Caco-2 (cell line): ENCODE measurements at regions of chr6 and their contacts with region 1.

Region 1: GRCh38 chr6:141988954-141989705 is 143.6 kb upstream of the GJE1 start:
- DNase-seq: peak in 1 of 2 experiments; percentile 65
- H3K4me3 ChIP-seq: no peak overlapping the region
- H3K4me3 Mint-ChIP-seq: no peak overlapping the region
- H3K27ac Mint-ChIP-seq: no peak overlapping the region
- H3K4me1 ChIP-seq: no peaks in the 10 kb centered on the region
- H3K4me1 Mint-ChIP-seq: no peaks in the 10 kb centered on the region
- H3K27me3 ChIP-seq: no peaks in the 10 kb centered on the region
- H3K27me3 Mint-ChIP-seq: peaks cover 4% of the 10 kb centered on the region
- CTCF ChIP-seq: peak; percentile 74 to 76

Region 2: GRCh38 chr6:142009647-142010046 is 20.5 kb after region 1 on chr6:
- CTCF ChIA-PET with region 1: interaction called, 4 read pairs
- POLR2A ChIA-PET with region 1: no interaction called
- intact Hi-C with region 1: loop called (anchors 1 kb)
- DNase-seq: peak in 1 of 2 experiments; percentile 23
- H3K4me3 ChIP-seq: no peak overlapping the region
- H3K4me3 Mint-ChIP-seq: no peak overlapping the region
- H3K27ac Mint-ChIP-seq: no peak overlapping the region
- H3K4me1 ChIP-seq: peaks cover 28% of the 10 kb centered on the region
- H3K4me1 Mint-ChIP-seq: peaks cover 33% of the 10 kb centered on the region
- H3K27me3 ChIP-seq: no peaks in the 10 kb centered on the region
- H3K27me3 Mint-ChIP-seq: no peaks in the 10 kb centered on the region
- CTCF ChIP-seq: no peak

Region 3: DNA sequence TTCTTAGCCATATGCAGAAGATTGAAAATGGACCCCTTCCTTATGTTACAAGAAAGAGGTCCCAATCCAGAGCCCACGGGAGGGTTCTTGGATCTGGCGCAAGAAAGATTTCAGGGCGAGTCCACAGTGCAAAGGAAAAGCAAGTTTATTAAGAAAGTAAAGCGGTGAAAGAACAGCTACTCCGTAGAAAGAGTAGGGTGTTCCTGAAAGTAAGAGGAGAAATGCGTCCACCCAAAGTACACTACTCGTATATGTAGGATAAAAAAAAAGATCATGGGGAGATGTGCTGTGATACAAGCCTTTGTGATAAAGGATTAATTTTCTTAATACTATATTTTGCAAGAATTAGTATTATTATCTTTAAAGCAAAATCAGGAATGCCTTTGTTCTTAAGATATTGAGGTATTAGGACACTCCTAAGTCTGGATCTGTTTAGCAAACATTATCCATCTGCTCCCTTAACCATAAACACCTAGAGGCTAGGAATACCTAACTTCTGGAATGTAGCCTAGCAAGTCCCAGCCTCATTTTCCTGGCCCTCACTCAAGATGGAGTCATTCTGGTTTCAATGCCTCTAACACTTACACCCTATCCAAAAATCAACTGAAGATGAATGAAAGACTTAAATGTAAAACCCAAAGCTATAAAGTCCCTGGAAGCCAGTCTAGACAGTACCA is 37.2 kb after region 1 on chr6:
- CTCF ChIA-PET with region 1: no interaction called
- POLR2A ChIA-PET with region 1: no interaction called
- intact Hi-C with region 1: no loop called
- DNase-seq: peak in 1 of 2 experiments; percentile 54
- H3K4me3 ChIP-seq: no peak overlapping the region
- H3K4me3 Mint-ChIP-seq: peak overlapping the region; percentile 4
- H3K27ac Mint-ChIP-seq: peak overlapping the region; percentile 58
- H3K4me1 ChIP-seq: peaks cover 25% of the 10 kb centered on the region
- H3K4me1 Mint-ChIP-seq: peaks cover 17% of the 10 kb centered on the region
- H3K27me3 ChIP-seq: no peaks in the 10 kb centered on the region
- H3K27me3 Mint-ChIP-seq: no peaks in the 10 kb centered on the region
- CTCF ChIP-seq: no peak

Region 4: DNA sequence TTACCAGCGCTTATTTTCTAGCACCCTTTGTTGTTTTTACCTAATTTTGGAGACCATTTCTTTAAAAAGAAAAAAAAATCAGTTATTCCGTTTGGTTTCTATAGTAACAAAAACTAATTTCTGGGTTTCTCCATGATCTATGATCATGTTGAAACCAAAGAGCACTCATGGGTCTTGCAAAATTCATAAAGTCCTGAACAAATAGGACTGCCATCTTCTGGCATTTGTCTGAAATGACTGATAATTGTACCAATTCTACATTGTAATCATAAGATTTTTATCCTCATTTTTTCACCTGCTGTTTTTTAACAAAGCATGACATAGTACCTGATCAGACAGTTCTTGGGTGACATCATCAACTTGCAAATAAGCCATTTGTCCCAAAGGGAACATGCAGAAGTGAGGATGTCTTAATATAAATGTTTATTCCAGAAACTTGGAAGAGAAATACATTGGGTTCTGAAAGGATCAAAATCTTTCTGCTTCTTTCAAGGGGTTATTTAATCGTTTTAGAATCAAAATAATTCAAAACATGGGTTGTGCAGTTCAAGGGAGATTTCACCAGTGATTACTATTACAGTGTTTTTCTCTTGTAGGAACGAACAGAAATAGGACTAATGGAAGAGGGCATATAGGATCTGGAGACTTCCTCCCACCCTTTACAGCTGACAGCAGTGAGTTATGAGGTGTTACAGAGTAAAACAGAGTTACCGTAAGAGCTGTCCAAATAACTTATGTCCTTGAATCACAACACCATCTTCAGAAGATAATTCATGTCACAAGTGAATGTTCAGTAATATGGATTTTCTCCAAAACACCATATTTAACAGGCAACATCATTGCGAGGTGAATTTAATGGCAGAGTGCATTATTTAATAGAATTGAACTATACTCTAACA is 56.5 kb after region 1 on chr6:
- CTCF ChIA-PET with region 1: no interaction called
- POLR2A ChIA-PET with region 1: no interaction called
- intact Hi-C with region 1: loop called (anchors 1 kb)
- DNase-seq: peak in 1 of 2 experiments; percentile 4
- H3K4me3 ChIP-seq: no peak overlapping the region
- H3K4me3 Mint-ChIP-seq: no peak overlapping the region
- H3K27ac Mint-ChIP-seq: no peak overlapping the region
- H3K4me1 ChIP-seq: no peaks in the 10 kb centered on the region
- H3K4me1 Mint-ChIP-seq: no peaks in the 10 kb centered on the region
- H3K27me3 ChIP-seq: no peaks in the 10 kb centered on the region
- H3K27me3 Mint-ChIP-seq: peaks cover 8% of the 10 kb centered on the region
- CTCF ChIP-seq: peak in 1 of 2 experiments; percentile 16

Region 5: DNA sequence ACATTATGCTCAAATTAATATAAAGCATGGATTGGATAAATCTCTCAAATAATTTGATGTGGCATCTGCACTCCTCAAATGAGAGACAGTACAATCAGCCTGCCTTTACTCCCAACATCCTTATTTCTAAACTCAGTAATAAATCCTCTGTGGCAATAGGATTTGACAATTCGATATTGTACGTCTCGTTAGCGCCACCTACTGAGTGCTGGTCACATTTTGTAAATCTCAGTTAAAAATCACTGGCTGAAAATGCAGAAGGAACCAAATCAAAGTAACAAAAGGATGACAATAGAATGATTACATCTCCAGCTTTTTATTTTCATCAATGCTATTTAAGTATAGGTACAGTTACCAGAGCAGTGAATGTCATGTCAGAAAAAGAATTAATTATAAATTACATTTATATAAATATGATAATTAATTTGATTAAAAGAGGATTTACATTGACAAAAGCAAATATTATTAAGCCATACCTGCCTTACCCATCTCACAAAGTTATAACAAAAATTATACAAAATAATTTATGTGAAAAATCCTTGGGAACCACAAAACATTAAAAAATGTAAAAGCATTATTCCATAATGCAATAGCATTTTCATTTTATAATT is 123.4 kb after region 1 on chr6:
- CTCF ChIA-PET with region 1: interaction called, 3 read pairs
- POLR2A ChIA-PET with region 1: no interaction called
- intact Hi-C with region 1: loop called (anchors 1 kb)
- DNase-seq: peak; percentile 72 to 76
- H3K4me3 ChIP-seq: no peak overlapping the region
- H3K4me3 Mint-ChIP-seq: no peak overlapping the region
- H3K27ac Mint-ChIP-seq: no peak overlapping the region
- H3K4me1 ChIP-seq: no peaks in the 10 kb centered on the region
- H3K4me1 Mint-ChIP-seq: no peaks in the 10 kb centered on the region
- H3K27me3 ChIP-seq: no peaks in the 10 kb centered on the region
- H3K27me3 Mint-ChIP-seq: peaks cover 4% of the 10 kb centered on the region
- CTCF ChIP-seq: peak; percentile 71 to 86

Region 6: DNA sequence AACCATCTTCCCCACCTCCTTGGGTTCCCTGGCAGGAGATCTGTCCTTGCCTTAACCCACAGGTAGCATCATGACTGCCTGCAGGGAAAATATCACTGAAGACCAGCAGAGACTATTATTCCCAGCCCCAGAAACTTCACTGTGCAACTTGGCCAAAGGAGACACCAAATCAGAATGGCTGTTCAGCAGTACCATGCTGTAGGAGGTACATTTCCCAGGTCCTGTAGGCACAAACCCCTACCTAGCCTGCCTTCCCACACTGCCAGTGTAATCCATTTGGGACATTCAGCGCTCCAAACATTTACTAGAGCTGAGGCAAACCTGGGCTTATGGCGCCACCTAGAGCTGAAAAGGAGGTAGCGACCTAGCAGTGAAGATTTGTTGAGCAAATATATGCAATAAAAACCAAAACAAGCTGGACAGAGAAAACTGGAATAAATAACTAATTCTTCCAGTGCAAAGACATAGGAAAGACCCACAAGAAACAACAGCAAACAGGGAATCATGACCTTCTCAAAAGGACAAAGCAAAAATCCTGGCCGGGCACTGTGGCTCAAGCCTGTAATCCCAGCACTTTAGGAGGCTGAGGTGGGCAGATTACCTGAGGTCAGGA is 218.2 kb after region 1 on chr6:
- CTCF ChIA-PET with region 1: interaction called, 3 read pairs
- POLR2A ChIA-PET with region 1: no interaction called
- intact Hi-C with region 1: loop called (anchors 1 kb)
- DNase-seq: peak; percentile 54 to 69
- H3K4me3 ChIP-seq: no peak overlapping the region
- H3K4me3 Mint-ChIP-seq: no peak overlapping the region
- H3K27ac Mint-ChIP-seq: no peak overlapping the region
- H3K4me1 ChIP-seq: no peaks in the 10 kb centered on the region
- H3K4me1 Mint-ChIP-seq: no peaks in the 10 kb centered on the region
- H3K27me3 ChIP-seq: no peaks in the 10 kb centered on the region
- H3K27me3 Mint-ChIP-seq: no peaks in the 10 kb centered on the region
- CTCF ChIP-seq: peak; percentile 81 to 87